CD14-positive monocyte (primary cell): ENCODE measurements at regions of chr1 and their contacts with region 1.

Region 1: DNA sequence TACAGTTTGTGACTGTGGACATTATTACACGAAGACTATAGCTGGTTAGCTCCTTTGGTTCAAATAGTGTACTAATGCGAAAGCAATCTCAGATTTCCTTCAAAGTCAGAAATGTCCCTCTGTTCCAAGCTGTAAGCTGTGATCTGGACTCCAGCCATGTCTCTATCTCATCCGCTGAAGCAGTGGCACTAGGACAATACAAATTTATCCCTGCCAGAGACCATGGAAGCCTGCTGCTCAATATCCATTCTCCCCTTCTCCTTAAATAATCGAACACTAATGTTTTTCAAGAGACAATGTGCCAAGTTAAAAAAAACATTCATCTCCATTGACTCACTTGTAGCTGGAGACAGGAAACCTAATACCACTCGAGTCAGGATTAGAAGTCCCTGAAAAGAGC is 38.5 kb upstream of the PGBD5 start:
- DNase-seq: no peak
- H3K4me3 ChIP-seq: no peak overlapping the region
- H3K4me3 Mint-ChIP-seq: no peak overlapping the region
- H3K27ac ChIP-seq: no peak overlapping the region
- H3K27ac Mint-ChIP-seq: peak overlapping the region in 1 of 7 donors; percentile 58
- H3K4me1 ChIP-seq: peaks cover 1 to 5% of the 10 kb centered on the region in 2 donors
- H3K4me1 Mint-ChIP-seq: peaks cover 3% of the 10 kb centered on the region
- H3K27me3 ChIP-seq: peaks cover 2 to 5% of the 10 kb centered on the region in 2 donors
- H3K27me3 Mint-ChIP-seq: peaks cover 5 to 12% (median 10%) of the 10 kb centered on the region in 3 donors
- CTCF ChIP-seq: no peak

Region 2: GRCh38 chr1:230231774-230232145 is 232.9 kb before region 1 on chr1:
- intact Hi-C with region 1: no loop called
- DNase-seq: no peak
- H3K4me3 ChIP-seq: no peak overlapping the region
- H3K4me3 Mint-ChIP-seq: no peak overlapping the region
- H3K27ac ChIP-seq: no peak overlapping the region
- H3K27ac Mint-ChIP-seq: peak overlapping the region in 2 of 7 donors; percentile 11 to 35
- H3K4me1 ChIP-seq: peaks cover 3 to 7% of the 10 kb centered on the region in 2 donors
- H3K4me1 Mint-ChIP-seq: peaks cover 21% of the 10 kb centered on the region
- H3K27me3 ChIP-seq: no peaks in the 10 kb centered on the region
- H3K27me3 Mint-ChIP-seq: no peaks in the 10 kb centered on the region
- CTCF ChIP-seq: no peak

Region 3: DNA sequence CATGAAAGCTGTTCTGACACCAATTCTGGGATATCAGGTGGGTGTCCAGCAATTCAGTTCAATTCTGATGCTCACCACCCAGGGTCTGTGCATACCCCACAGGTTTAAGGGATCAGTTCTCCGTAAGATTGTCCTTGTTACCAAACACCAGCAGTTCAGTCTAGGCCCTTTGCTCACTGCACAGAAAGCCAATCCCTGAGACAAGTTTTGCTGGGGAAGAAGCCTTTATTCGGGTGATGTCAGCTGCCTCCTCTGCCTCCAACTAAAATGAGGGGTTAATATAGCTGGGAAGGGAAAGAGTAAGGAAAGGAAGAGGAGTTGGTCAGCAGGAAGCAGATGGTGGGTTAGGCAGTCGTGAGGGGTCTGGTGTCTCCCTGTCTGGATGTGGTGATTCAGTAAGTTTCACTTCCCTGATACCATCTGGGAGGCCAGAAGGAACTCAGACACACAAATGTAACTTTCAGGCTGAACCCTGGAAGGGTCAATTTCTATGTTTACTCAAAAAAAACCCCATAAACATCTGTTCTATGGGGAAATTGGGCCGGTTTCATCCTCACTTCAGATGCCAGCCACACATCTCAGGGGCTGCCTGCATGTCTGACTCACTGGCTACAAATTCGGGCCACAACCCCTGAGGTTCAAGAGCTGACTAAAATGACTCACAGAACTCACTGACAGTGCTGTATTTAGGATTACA is 44.8 kb after region 1 on chr1:
- intact Hi-C with region 1: loop called in 1 of 2 experiments (anchors 5 kb)
- DNase-seq: peak; percentile 89 to 93 (median 91)
- H3K4me3 ChIP-seq: peak overlapping the region in 1 of 3 experiments; percentile 5
- H3K4me3 Mint-ChIP-seq: peak overlapping the region in 1 of 2 donors; percentile 56
- H3K27ac ChIP-seq: peak overlapping the region; percentile 82 to 93
- H3K27ac Mint-ChIP-seq: peak overlapping the region; percentile 82 to 97 (median 91)
- H3K4me1 ChIP-seq: peaks cover 35 to 42% of the 10 kb centered on the region in 2 donors
- H3K4me1 Mint-ChIP-seq: peaks cover 38% of the 10 kb centered on the region
- H3K27me3 ChIP-seq: no peaks in the 10 kb centered on the region
- H3K27me3 Mint-ChIP-seq: peaks cover 2 to 25% (median 3%) of the 10 kb centered on the region in 3 donors
- CTCF ChIP-seq: no peak